AG04449 (cell line): ENCODE measurements at regions of chr14 and their contacts with region 1.

Region 1: GRCh38 chr14:50619556-50620141 is 48.5 kb downstream of the SAV1 start:
- DNase-seq: no peak
- H3K4me3 ChIP-seq: no peak overlapping the region
- CTCF ChIP-seq: peak; percentile 58

Region 2: GRCh38 chr14:50510157-50510556 is 109.5 kb before region 1 on chr14:
- CTCF ChIA-PET with region 1: no interaction called
- POLR2A ChIA-PET with region 1: no interaction called
- DNase-seq: no peak
- H3K4me3 ChIP-seq: no peak overlapping the region
- CTCF ChIP-seq: no peak

Region 3: DNA sequence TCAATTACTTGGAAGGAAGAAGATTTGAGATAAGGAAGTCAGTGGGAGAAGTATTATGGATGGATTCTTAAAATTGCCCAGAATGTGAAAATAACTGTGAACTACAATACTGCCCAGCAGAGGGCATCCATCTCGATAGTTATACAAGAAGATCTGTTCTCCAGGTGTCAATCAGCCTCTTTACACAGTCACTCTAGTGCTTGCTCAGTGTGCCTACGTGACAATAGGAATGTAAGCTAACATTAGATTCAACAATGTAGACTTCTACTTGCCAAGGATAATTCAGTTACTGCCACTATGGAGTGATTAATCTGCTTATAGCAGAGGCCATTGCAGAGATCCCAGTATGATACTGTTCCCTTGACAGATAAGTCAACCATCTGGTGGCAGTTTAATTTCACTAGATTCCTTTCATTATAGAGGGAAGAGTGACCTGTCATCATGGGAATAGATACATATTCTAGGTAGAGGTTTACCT is 76.7 kb before region 1 on chr14:
- CTCF ChIA-PET with region 1: no interaction called
- POLR2A ChIA-PET with region 1: no interaction called
- DNase-seq: no peak
- H3K4me3 ChIP-seq: no peak overlapping the region
- CTCF ChIP-seq: peak; percentile 47

Region 4: GRCh38 chr14:50607181-50607580 is 12.5 kb before region 1 on chr14:
- CTCF ChIA-PET with region 1: interaction called, 14 read pairs
- POLR2A ChIA-PET with region 1: no interaction called
- DNase-seq: peak; percentile 65
- H3K4me3 ChIP-seq: no peak overlapping the region
- CTCF ChIP-seq: no peak

Region 5: GRCh38 chr14:50631408-50631821 is 11.8 kb after region 1 on chr14:
- CTCF ChIA-PET with region 1: interaction called, 28 read pairs
- POLR2A ChIA-PET with region 1: no interaction called
- DNase-seq: no peak
- H3K4me3 ChIP-seq: no peak overlapping the region
- CTCF ChIP-seq: no peak